BJ (cell line): ENCODE measurements at regions of chr11 and their contacts with region 1.

Region 1: GRCh38 chr11:8263769-8264410 is at the start of gene LMO1:
- DNase-seq: no peak
- H3K4me3 ChIP-seq: peak within 1 kb of the TSS; percentile 16
- H3K27me3 ChIP-seq: peaks cover 63% of the 10 kb centered on the region
- CTCF ChIP-seq: peak; percentile 93
- polyA plus RNA-seq, gene LMO1: not detected in 2 replicates

Region 2: DNA sequence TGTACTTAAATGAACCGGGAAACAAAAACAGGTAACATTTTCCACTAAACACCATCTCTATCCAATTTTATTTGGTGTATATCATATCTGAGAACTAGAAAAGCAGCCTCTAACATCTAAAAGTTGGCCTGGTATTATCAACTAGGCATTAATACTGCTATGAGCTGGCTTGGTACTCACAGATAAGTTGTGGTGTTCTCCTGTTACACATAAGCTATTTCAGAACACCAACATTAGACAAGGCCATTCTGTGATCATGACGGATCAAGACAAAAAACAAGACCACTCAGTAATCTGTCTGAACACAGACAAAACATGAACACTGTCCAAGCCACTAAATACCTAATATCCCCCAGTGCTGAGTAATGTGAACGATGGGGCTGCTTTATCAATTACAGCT is 107.0 kb before region 1 on chr11:
- CTCF ChIA-PET with region 1: no interaction called
- POLR2A ChIA-PET with region 1: no interaction called
- DNase-seq: no peak
- H3K4me3 ChIP-seq: no peak overlapping the region
- H3K27me3 ChIP-seq: peaks cover 2% of the 10 kb centered on the region; the same call in 1 of the 2 replicates
- CTCF ChIP-seq: no peak

Region 3: GRCh38 chr11:8192016-8192895 is 71.6 kb before region 1 on chr11:
- CTCF ChIA-PET with region 1: interaction called, 21 read pairs
- POLR2A ChIA-PET with region 1: no interaction called
- DNase-seq: peak; percentile 3
- H3K4me3 ChIP-seq: no peak overlapping the region
- H3K27me3 ChIP-seq: peaks cover 3% of the 10 kb centered on the region; the same call in 1 of the 2 replicates
- CTCF ChIP-seq: peak; percentile 93

Region 4: DNA sequence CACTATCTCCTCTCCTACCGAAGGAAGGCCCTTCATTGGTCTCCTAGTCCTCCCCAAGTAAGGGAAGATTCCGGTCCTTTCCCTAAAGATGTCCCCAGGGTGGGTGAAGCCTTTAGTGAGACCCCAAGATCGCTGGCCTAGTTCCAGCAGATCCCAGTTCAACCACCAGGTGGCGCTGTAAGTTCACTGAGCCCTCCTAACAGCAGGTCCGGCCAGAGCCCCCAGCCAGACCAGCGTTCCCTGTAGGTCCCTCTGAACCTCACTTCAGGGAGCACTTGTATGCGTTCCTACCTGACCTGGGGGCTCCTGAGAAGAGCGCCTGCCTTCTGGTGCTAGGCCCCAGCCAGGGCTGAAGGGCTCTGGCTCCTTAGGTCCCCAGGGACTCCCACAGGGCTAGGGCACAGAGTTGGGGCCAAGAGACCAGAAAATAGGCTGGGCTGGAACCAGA is 38.3 kb before region 1 on chr11:
- CTCF ChIA-PET with region 1: interaction called, 49 read pairs
- POLR2A ChIA-PET with region 1: no interaction called
- DNase-seq: no peak
- H3K4me3 ChIP-seq: no peak overlapping the region
- H3K27me3 ChIP-seq: peaks cover 2% of the 10 kb centered on the region; the same call in 1 of the 2 replicates
- CTCF ChIP-seq: peak; percentile 89

Region 5: DNA sequence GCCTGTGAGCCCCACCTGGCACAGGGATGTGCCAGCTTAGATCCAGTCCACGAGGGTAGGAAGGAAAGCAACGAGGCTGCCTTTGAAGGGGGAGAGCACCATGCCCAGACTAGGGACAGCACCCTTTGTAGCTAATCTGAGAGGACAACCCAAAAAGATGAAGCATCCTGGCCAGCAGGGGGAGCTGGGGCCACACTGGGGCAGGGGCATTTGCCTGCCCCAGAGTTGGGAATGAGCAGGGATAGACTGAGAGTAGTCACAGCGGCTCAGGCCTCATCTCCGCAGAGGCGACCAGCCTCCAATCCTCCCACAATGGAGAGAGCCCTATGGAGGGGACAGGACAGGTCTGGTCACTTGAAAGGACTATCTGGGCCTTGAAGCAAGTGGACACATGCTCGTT is 16.6 kb before region 1 on chr11:
- CTCF ChIA-PET with region 1: interaction called, 38 read pairs
- POLR2A ChIA-PET with region 1: no interaction called
- DNase-seq: no peak
- H3K4me3 ChIP-seq: no peak overlapping the region
- H3K27me3 ChIP-seq: peaks cover 7% of the 10 kb centered on the region
- CTCF ChIP-seq: peak; percentile 63

Region 6: GRCh38 chr11:8277691-8278090 is 13.8 kb after region 1 on chr11:
- CTCF ChIA-PET with region 1: interaction called, 39 read pairs
- POLR2A ChIA-PET with region 1: no interaction called
- DNase-seq: no peak
- H3K4me3 ChIP-seq: no peak overlapping the region
- H3K27me3 ChIP-seq: no peaks in the 10 kb centered on the region
- CTCF ChIP-seq: no peak

Region 7: DNA sequence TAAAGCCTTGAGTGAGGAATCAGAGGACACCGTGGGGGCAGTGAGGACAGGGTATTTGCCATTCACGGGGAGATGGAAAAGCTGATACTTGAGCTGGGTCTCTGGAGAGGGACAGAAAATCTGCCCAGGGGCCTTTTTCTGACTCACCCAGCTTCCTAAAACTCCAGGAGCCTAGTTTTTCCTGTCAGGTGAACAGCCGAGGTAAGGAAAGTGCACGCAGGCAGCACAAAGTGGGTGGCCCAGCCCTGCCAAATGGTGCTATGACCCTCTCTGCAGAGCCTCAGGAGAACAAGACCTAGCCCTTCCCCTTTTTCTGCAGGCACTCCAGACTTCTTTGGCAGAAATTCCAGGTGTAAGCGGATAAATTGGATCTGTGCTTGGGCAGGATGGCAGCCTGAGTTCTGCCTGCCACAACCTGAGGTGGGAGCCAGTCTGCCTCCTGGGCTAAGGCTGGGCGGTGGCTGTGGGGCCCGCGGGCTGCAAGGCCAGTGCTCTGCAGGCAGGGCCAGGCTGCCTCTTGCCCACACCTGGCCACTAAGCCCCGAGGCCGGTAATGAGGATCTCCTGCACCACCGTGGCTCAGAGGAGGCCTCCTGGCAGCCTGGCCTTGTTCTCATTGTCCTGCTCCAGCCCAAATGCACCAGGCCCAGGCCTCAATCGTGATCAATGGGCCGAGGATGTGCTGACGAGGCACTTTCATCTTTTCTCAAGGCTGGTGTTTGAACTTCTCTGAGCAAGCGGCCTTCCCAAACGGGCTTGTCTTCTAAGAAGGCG is 72.7 kb after region 1 on chr11:
- CTCF ChIA-PET with region 1: interaction called, 4 read pairs
- POLR2A ChIA-PET with region 1: interaction called, 12 read pairs
- DNase-seq: no peak
- H3K4me3 ChIP-seq: no peak overlapping the region
- H3K27me3 ChIP-seq: peaks cover 5% of the 10 kb centered on the region; the same call in 1 of the 2 replicates
- CTCF ChIP-seq: no peak